Activated B cell treated with CpG ODN at 0.5 μM for 24 hours (primary cell): ENCODE measurements at regions of chr14 and their contacts with region 1.

Region 1: DNA sequence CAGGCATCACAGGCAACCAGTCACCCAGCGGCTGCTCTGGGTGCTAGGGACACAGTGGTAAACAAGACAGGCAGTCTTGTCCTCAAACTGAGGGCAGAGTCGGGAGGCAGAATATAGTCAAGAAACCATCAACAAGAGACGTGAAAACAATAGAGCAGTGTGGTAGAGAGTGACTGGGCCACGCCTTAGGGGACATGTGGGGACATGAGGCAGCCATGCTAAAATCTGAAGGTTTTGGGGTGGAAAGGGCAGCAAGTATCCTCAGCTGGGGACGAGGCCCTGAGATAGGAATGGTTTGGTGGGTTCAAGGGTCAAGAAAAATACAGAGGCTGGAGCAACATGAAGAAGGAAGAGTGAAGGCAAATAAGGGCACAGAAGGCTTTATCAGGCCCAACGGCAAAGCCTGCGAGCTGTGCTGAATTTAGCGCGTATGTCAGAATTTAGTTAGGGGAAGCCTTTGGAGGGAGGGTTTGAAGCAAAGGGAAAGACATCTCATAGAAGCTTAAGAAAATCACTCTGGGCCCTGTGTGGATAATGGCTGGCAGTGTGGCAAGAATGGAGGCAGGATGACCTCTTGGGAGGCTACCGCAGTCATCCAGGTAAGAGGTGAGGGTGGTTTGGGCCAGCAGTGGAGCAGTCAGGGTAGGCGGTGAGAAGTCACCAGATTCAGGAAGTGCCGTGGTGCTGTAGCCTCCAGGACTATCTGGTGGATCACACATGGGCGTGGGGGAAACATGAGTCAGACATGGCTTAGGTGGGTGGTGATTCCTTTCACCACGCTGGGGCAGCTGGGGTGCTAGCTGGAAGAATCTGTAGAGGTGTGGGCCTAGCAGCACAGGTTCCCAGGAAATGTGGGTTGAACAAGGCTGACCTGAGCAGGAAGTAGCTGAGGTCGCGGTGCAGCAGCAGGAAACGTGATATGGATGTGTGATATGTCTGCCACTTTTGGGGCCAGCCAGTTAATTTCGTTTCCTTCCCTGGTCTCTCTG is 3.0 kb downstream of the EVL start:
- DNase-seq: peak; percentile 60
- ATAC-seq: peak; percentile 47
- H3K4me3 Mint-ChIP-seq: peak overlapping the region; percentile 94
- H3K27ac Mint-ChIP-seq: peak overlapping the region; percentile 98
- H3K4me1 Mint-ChIP-seq: peaks cover 95% of the 10 kb centered on the region
- H3K27me3 Mint-ChIP-seq: no peaks in the 10 kb centered on the region
- CTCF ChIP-seq: no peak

Region 2: DNA sequence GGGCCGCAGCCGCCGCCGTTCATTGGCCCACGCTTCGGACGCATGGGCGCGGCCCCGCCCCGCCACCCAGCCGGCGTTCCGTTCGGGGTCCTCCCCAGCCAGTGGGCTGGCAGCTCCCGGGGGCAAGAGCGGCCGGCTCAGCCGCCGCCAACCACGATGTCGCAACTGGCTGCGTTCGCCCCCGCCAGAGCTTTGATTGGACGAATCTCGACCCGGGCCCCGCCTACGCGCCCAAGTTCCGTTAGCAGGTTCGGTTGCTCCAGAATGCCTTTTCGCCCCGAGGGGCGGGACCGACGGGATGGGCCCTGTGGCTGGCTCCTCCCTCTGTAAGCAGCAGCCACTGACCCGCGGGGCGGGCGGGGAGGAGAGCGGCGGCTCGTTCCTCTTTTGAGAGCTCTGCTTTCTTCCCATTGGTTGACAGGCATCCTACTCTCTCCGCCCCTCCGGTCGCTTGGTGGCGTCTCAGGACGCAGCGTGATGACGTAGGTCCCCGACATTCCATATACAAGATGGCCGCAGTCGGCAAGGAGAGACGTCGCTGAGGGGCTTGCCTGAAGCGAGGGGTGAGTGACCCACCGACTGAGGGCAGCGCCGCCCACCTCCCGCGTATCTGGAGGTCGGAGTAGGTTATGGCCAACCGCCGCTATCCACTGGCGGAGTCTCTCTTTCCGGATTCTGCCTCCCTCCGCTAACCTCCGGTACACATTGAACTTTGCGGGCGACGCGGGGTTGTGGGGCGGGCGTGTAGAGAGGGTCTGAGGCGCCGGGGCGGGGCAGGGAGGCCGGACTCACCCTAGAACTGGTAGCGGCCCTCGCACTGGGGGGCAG is 587.1 kb before region 1 on chr14 and contains the start of gene CCNK:
- CTCF ChIA-PET with region 1: no interaction called
- POLR2A ChIA-PET with region 1: no interaction called
- intact Hi-C with region 1: loop called (anchors 2 kb)
- DNase-seq: peak; percentile 99
- ATAC-seq: peak; percentile 87
- H3K4me3 Mint-ChIP-seq: peak within 1 kb of the TSS; percentile 97
- H3K27ac Mint-ChIP-seq: peak within 1 kb of the TSS; percentile 96
- H3K4me1 Mint-ChIP-seq: peaks cover 59% of the 10 kb centered on the region
- H3K27me3 Mint-ChIP-seq: no peaks in the 10 kb centered on the region
- CTCF ChIP-seq: no peak
- total RNA-seq, gene CCNK: 76.7 and 79.2 TPM in 2 replicates

Region 3: GRCh38 chr14:99683619-99684355 is 384.5 kb before region 1 on chr14 and contains the start of gene CYP46A1:
- CTCF ChIA-PET with region 1: no interaction called
- POLR2A ChIA-PET with region 1: no interaction called
- intact Hi-C with region 1: loop called (anchors 5 kb)
- DNase-seq: peak; percentile 98
- ATAC-seq: peak; percentile 96
- H3K4me3 Mint-ChIP-seq: peak within 1 kb of the TSS; percentile 92
- H3K27ac Mint-ChIP-seq: peak within 1 kb of the TSS; percentile 86
- H3K4me1 Mint-ChIP-seq: peaks cover 26% of the 10 kb centered on the region
- H3K27me3 Mint-ChIP-seq: peaks cover 34% of the 10 kb centered on the region
- CTCF ChIP-seq: no peak
- total RNA-seq, gene CYP46A1: 0.07 TPM in 1 of 2 replicates, not detected in the other

Region 4: GRCh38 chr14:100056964-100057795 is 11.1 kb before region 1 on chr14:
- CTCF ChIA-PET with region 1: interaction called, 15 read pairs
- POLR2A ChIA-PET with region 1: interaction called, 9 read pairs
- intact Hi-C with region 1: loop called (anchors 1 kb)
- DNase-seq: no peak
- ATAC-seq: peak; percentile 82
- H3K4me3 Mint-ChIP-seq: no peak overlapping the region
- H3K27ac Mint-ChIP-seq: peak overlapping the region; percentile 43
- H3K4me1 Mint-ChIP-seq: peaks cover 32% of the 10 kb centered on the region
- H3K27me3 Mint-ChIP-seq: no peaks in the 10 kb centered on the region
- CTCF ChIP-seq: no peak

Region 5: DNA sequence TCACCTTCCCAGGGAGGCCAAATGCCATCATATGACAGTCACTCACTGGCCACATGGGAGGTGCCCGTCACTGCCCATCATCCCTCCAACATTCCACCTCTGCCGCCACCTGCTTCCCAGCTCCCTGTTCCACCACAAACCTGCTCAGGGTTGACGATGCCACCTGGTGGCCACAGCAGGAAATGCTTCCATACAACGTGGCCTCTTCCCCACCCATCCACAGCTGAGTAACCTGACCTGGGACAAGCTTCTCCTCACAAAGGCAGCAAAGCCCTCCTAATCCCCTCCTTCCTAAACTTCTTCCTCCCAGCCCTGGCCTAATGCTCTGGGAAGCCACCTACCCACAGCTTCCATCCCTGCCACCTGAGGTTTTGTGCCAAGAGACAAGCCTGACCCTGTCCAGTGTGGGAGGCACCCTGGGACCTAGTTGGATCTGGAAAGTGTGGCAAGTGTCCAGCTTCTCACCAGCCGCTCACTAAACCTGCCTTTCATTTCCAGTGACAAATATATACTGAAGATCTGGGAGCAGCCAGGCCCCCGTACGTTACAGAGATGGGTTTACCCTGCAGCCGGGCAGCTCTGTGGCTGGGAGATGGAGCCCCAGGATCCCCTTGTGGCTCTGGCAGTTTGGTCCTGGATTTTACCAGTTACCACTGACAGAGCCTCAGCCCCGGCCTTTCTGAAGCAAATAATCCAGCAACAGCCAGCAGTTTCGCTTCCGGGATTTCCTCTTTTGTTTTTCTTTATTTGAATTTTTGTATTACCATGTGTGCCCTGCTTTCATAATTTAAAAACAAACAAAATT is 87.0 kb after region 1 on chr14:
- CTCF ChIA-PET with region 1: no interaction called
- POLR2A ChIA-PET with region 1: interaction called, 5 read pairs
- intact Hi-C with region 1: loop called (anchors 1 kb)
- DNase-seq: no peak
- ATAC-seq: no peak
- H3K4me3 Mint-ChIP-seq: no peak overlapping the region
- H3K27ac Mint-ChIP-seq: no peak overlapping the region
- H3K4me1 Mint-ChIP-seq: peaks cover 31% of the 10 kb centered on the region
- H3K27me3 Mint-ChIP-seq: no peaks in the 10 kb centered on the region
- CTCF ChIP-seq: no peak